K562 (cell line): ENCODE measurements at regions of chr1 and their contacts with region 1.

Region 1: GRCh38 chr1:207963427-207964194 is 52.7 kb upstream of the CD34 start:
- DNase-seq: peak; percentile 94 to 100 (median 100)
- ATAC-seq: peak; percentile 96
- H3K4me3 ChIP-seq: peak overlapping the region; percentile 25
- H3K27ac ChIP-seq: peak overlapping the region; percentile 69
- H3K4me1 ChIP-seq: peaks cover 19 to 24% of the 10 kb centered on the region in 2 experiments
- H3K27me3 ChIP-seq: peaks cover 0 to 6% of the 10 kb centered on the region in 2 experiments; a peak in 1 of 5 replicates
- CTCF ChIP-seq: peak; percentile 98 to 99 (median 99)
- EP300 ChIP-seq: peak; percentile 4; the same call in 1 of the 2 replicates
- POLR2A ChIP-seq: peak; percentile 92
- RAD21 ChIP-seq: peak; percentile 100

Region 2: GRCh38 chr1:207711285-207711684 is 252.3 kb before region 1 on chr1:
- CTCF ChIA-PET with region 1: no interaction called
- POLR2A ChIA-PET with region 1: no interaction called
- in situ Hi-C with region 1: no loop called
- intact Hi-C with region 1: loop called (anchors 10 kb)
- DNase-seq: peak in 2 of 4 experiments; percentile 63 to 69
- ATAC-seq: peak; percentile 91
- H3K4me3 ChIP-seq: no peak overlapping the region
- H3K27ac ChIP-seq: no peak overlapping the region
- H3K4me1 ChIP-seq: 0 out of 5 replicates have a peak, but pooled peaks cover 0 to 4% of the 10 kb centered on the region in 2 experiments
- H3K27me3 ChIP-seq: no peaks in the 10 kb centered on the region
- CTCF ChIP-seq: peak; percentile 35 to 62 (median 55); a peak in 4 of 6 replicates
- EP300 ChIP-seq: no peak
- POLR2A ChIP-seq: no peak
- RAD21 ChIP-seq: peak; percentile 63 to 83

Region 3: DNA sequence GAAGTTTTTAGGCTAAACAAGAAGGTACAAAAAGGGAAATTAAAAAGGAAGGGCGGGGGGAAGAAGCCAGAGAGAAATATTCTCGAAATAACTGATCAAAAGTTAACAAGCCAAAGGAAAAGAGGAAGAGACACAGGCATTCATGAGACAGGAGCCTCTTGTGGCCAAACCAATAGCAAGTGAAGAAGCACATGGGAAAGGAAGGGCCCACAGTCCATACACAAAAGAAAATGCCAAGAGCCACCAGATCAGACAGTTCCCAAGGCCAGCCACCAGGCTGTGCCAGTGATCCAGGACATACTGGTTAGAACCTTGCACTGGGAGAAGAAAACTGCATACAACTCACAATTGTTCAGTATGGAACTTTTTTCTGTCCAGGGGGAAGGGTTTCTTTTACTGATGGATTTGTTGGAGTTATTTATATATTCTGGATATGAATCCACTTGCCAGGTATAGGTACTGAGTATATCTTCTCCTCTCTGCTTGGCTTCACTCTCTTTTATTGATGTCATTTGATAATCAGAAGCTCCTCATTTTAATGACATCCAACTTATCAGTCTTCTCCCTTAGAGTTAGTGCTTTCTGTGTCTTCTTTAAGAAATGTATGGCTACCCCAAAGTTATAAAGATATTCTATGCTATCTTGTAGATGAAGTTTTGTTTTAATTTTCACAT is 135.0 kb before region 1 on chr1:
- CTCF ChIA-PET with region 1: interaction called, 10 read pairs
- POLR2A ChIA-PET with region 1: interaction called, 5 read pairs
- in situ Hi-C with region 1: loop called (anchors 5 kb)
- intact Hi-C with region 1: loop called (anchors 2 kb)
- DNase-seq: peak; percentile 73 to 91 (median 80)
- ATAC-seq: peak; percentile 83
- H3K4me3 ChIP-seq: no peak overlapping the region
- H3K27ac ChIP-seq: peak overlapping the region; percentile 36; the same call in 1 of the 3 replicates
- H3K4me1 ChIP-seq: peaks cover 53 to 80% of the 10 kb centered on the region in 2 experiments
- H3K27me3 ChIP-seq: no peaks in the 10 kb centered on the region
- CTCF ChIP-seq: peak; percentile 94 to 99 (median 96)
- EP300 ChIP-seq: no peak
- POLR2A ChIP-seq: no peak
- RAD21 ChIP-seq: peak; percentile 92 to 97

Region 4: DNA sequence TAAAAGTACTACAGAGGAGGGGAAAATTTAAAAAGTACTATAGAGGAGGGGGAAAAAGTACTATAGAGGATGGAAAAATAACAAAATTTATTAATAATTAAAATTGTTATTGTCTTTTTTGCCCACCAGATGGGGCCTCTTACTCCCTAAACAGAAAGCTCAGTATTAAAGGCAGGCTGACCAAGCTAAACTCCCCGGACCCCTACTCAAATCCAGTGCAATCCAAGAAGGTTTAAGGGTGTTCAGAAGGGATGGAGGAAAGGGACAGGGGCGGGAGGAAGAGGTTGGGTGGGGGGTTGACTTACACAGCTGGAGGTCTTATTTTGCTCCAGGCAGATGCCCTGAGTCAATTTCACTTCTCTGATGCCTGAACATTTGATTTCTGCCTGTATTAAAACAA is 66.4 kb before region 1 on chr1:
- CTCF ChIA-PET with region 1: interaction called, 43 read pairs
- POLR2A ChIA-PET with region 1: interaction called, 5 read pairs
- in situ Hi-C with region 1: loop called (anchors 5 kb)
- intact Hi-C with region 1: loop called (anchors 1 kb)
- DNase-seq: no peak
- ATAC-seq: peak; percentile 35; the same call in 2 of the 3 replicates
- H3K4me3 ChIP-seq: no peak overlapping the region
- H3K27ac ChIP-seq: no peak overlapping the region
- H3K4me1 ChIP-seq: peaks cover 0 to 5% of the 10 kb centered on the region in 2 experiments; a peak in 3 of 5 replicates
- H3K27me3 ChIP-seq: no peaks in the 10 kb centered on the region
- CTCF ChIP-seq: peak; percentile 29 to 63 (median 44); a peak in 4 of 6 replicates
- EP300 ChIP-seq: no peak
- POLR2A ChIP-seq: no peak
- RAD21 ChIP-seq: peak; percentile 61 to 69

Region 5: GRCh38 chr1:207919523-207920170 is 44.0 kb before region 1 on chr1:
- CTCF ChIA-PET with region 1: interaction called, 3 read pairs
- POLR2A ChIA-PET with region 1: no interaction called
- in situ Hi-C with region 1: no loop called
- intact Hi-C with region 1: loop called (anchors 1 kb)
- DNase-seq: no peak
- ATAC-seq: no peak
- H3K4me3 ChIP-seq: no peak overlapping the region
- H3K27ac ChIP-seq: no peak overlapping the region
- H3K4me1 ChIP-seq: peaks cover 6 to 26% of the 10 kb centered on the region in 2 experiments; a peak in 4 of 5 replicates
- H3K27me3 ChIP-seq: no peaks in the 10 kb centered on the region
- CTCF ChIP-seq: no peak
- EP300 ChIP-seq: no peak
- POLR2A ChIP-seq: no peak
- RAD21 ChIP-seq: no peak